ENCODE measurements at regions of chr1 and their contacts with region 1.

Region 1: DNA sequence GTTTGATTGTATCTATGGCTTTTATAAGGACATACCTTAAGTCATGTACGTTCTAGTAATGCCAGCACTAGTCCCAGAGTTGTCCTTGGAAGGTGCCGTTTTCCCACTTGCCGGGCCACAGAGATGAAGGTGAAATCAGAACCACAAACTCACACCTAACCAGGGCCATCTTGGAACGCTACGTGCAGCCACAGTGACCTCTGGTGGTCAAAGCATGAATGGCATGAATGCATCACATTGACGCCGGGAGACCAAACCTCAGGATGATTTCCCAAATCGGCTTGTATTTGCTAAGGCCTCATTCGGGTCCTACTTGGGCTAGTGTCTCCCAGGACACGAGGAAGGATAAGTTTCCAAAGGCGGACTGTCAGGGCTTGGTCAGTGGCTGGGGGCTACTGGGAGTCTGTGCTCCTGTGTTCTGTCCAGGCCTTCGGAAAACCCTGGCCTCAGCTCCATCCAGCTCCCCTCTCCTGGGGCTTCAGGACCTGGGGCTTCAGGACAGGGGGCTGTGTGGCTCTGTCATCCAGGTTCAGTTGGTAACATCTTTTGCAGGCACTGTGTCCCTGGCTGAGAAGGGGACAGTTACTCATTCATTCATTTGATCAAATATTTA is 260.5 kb downstream of the PRDM2 start:
- DNase-seq: peak; percentile 64
- H3K4me3 ChIP-seq: no peak overlapping the region
- H3K27ac ChIP-seq: no peak overlapping the region
- H3K4me1 ChIP-seq: no peaks in the 10 kb centered on the region
- H3K27me3 ChIP-seq: no peaks in the 10 kb centered on the region
- CTCF ChIP-seq: peak; percentile 89 to 94 (median 93)
- POLR2A ChIP-seq: no peak

Region 2: GRCh38 chr1:13662493-13662892 is 298.0 kb before region 1 on chr1:
- intact Hi-C with region 1: loop called (anchors 2 kb)
- DNase-seq: peak; percentile 16
- H3K4me3 ChIP-seq: no peak overlapping the region
- H3K27ac ChIP-seq: no peak overlapping the region
- H3K4me1 ChIP-seq: no peaks in the 10 kb centered on the region
- H3K27me3 ChIP-seq: no peaks in the 10 kb centered on the region
- CTCF ChIP-seq: no peak
- POLR2A ChIP-seq: no peak

Region 3: DNA sequence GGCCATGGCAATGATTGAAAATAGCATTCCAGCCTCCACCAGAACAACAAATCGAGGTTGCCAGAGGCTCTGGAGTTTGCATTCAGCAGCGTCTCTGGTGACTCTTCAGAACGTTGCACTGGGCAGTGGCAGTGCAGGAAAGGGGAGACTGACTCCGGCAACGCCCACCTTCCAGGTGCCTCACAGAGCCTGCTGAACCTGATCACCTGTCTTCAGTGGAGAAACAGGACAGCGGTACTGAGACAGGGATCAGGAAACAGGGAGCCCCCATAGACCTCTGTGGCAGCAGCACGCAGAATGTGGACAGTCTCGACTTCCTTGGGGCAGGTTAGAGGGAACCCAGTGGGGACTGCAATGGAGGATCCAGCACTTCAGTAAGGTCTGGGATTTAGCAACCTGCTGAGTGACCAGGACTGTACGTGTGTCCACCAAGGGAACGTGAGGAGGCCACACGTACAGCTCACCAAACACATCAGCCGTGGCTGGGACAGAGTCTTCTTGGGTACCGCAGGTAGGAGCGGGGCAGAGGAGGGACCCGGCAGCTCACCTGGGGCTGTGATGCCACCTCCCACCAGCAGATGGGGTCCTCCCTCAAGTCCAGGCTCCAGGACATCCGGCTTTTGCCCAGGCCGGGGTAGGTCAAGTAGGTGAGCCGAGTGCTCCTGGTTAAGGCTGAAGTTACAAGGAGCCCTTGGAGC is 131.9 kb before region 1 on chr1:
- intact Hi-C with region 1: loop called (anchors 5 kb)
- DNase-seq: no peak
- H3K4me3 ChIP-seq: no peak overlapping the region
- H3K27ac ChIP-seq: no peak overlapping the region
- H3K4me1 ChIP-seq: no peaks in the 10 kb centered on the region
- H3K27me3 ChIP-seq: no peaks in the 10 kb centered on the region
- CTCF ChIP-seq: peak; percentile 31 to 74 (median 46)
- POLR2A ChIP-seq: no peak

Region 4: GRCh38 chr1:13901039-13901438 is 59.4 kb before region 1 on chr1:
- intact Hi-C with region 1: no loop called
- DNase-seq: no peak
- H3K4me3 ChIP-seq: no peak overlapping the region
- H3K27ac ChIP-seq: peak overlapping the region in 1 of 2 donors; percentile 11
- H3K4me1 ChIP-seq: no peaks in the 10 kb centered on the region
- H3K27me3 ChIP-seq: no peaks in the 10 kb centered on the region
- CTCF ChIP-seq: no peak
- POLR2A ChIP-seq: no peak

Measured in prostate gland (tissue), 2 donors.